ENCODE measurements at regions of chr2 and their contacts with region 1.

Region 1: GRCh38 chr2:120958623-120959366 is 223.1 kb downstream of the GLI2 start:
- DNase-seq: no peak
- ATAC-seq: 0 out of 2 replicates have a peak, but pooled peaks have one; percentile 27
- H3K4me3 ChIP-seq: no peak overlapping the region
- H3K27ac ChIP-seq: no peak overlapping the region
- H3K4me1 ChIP-seq: peaks cover 4% of the 10 kb centered on the region
- H3K27me3 ChIP-seq: no peaks in the 10 kb centered on the region
- CTCF ChIP-seq: peak; percentile 35
- POLR2A ChIP-seq: no peak
- RAD21 ChIP-seq: peak; percentile 45

Region 2: DNA sequence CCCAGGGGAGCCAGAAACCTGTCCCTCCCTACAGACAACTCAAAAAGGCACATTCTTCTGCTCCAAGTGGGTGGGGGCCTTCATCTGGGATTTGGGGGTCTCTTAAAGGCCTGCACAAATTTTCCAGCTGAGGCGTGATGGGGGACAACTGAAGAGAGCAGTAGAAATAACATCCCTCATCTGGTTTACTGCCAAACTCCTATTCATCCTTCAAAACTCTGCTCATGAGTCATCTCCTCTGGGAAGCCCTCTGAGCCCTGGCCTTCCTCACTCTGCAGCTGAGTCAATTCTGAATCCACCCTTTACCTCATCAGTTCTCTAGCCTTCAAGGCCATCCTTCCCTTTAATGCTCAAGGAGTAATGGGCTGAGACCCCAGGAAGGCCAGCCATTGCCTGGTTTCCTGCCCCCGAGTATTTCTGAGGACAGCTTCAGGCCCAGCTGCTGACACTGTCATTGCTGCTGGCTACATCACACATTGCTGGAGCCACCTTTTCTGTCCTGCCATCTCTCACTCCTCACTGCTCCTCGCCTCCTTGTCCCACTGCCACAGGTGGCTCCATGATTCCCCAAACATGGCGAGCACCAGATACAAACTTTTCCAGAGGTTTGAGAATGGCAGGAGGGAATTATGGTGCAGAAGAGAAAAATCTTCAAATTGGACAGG is 255.3 kb before region 1 on chr2:
- CTCF ChIA-PET with region 1: no interaction called
- POLR2A ChIA-PET with region 1: no interaction called
- dilution Hi-C with region 1: no loop called
- in situ Hi-C with region 1: no loop called
- intact Hi-C with region 1: loop called (anchors 5 kb)
- DNase-seq: peak; percentile 91
- ATAC-seq: peak; percentile 93
- H3K4me3 ChIP-seq: no peak overlapping the region
- H3K27ac ChIP-seq: peak overlapping the region; percentile 44; the same call in 1 of the 2 replicates
- H3K4me1 ChIP-seq: peaks cover 4% of the 10 kb centered on the region
- H3K27me3 ChIP-seq: no peaks in the 10 kb centered on the region
- CTCF ChIP-seq: no peak
- POLR2A ChIP-seq: no peak
- RAD21 ChIP-seq: no peak

Region 3: DNA sequence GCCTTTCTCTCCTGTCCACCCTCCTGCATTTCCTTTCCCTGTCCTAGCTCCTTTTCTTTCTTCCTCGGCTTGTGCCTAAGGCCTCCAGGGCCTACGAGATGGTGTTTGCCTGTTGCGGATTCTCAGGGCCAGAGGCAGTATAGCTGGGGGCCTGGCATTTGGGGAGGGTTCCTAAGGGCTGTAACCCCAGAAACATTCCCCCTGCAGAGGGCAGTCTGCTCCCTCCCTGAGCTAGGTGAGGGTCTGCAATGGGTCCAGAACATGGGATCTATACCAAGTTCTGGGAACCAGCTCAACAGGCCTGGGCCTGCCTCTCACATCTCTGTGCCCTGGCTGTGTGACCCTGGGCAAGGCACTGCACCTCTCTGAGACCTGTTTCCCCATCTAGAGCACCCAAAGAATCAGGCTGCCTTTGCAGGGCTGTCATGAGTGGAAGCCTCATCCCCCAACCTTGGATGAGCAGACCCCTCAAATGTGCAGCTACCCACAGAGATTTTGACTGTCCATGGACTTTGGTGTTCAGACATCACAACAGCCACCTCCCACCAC is 125.6 kb before region 1 on chr2:
- CTCF ChIA-PET with region 1: no interaction called
- POLR2A ChIA-PET with region 1: interaction called, 11 read pairs
- dilution Hi-C with region 1: no loop called
- in situ Hi-C with region 1: no loop called
- intact Hi-C with region 1: no loop called
- DNase-seq: no peak
- ATAC-seq: no peak
- H3K4me3 ChIP-seq: no peak overlapping the region
- H3K27ac ChIP-seq: no peak overlapping the region
- H3K4me1 ChIP-seq: peaks cover 13% of the 10 kb centered on the region; the same call in 1 of the 2 replicates
- H3K27me3 ChIP-seq: no peaks in the 10 kb centered on the region
- CTCF ChIP-seq: no peak
- POLR2A ChIP-seq: no peak
- RAD21 ChIP-seq: no peak

Region 4: DNA sequence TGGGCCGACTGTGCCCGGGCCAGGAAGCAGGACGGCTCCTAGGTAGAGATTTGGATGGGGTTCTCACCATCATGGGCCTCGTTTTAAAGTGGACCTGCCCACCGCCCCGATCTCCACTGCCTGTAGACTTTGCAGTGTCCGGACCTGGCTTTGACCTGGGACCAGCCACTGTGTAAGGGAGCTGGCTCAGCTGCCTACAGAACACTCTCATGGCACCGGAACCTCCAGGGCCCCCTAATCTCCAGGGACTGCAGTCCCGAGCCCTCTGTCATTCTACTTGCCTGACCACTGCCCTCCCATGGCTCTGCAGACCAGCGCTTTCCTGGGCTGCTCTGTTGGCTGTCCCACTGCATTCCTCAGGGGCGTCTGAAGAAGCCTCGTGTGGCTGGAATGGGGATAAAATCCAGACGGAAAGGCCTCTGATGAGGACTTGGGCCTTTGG is 102.4 kb before region 1 on chr2:
- CTCF ChIA-PET with region 1: interaction called, 11 read pairs
- POLR2A ChIA-PET with region 1: no interaction called
- dilution Hi-C with region 1: no loop called
- in situ Hi-C with region 1: no loop called
- intact Hi-C with region 1: no loop called
- DNase-seq: peak; percentile 63
- ATAC-seq: peak; percentile 79
- H3K4me3 ChIP-seq: no peak overlapping the region
- H3K27ac ChIP-seq: no peak overlapping the region
- H3K4me1 ChIP-seq: peaks cover 27% of the 10 kb centered on the region
- H3K27me3 ChIP-seq: no peaks in the 10 kb centered on the region
- CTCF ChIP-seq: peak; percentile 59
- POLR2A ChIP-seq: no peak
- RAD21 ChIP-seq: peak; percentile 48

Region 5: GRCh38 chr2:121076885-121077549 is 118.2 kb after region 1 on chr2:
- CTCF ChIA-PET with region 1: no interaction called
- POLR2A ChIA-PET with region 1: no interaction called
- dilution Hi-C with region 1: no loop called
- in situ Hi-C with region 1: no loop called
- intact Hi-C with region 1: no loop called
- DNase-seq: peak; percentile 28
- ATAC-seq: peak; percentile 59
- H3K4me3 ChIP-seq: no peak overlapping the region
- H3K27ac ChIP-seq: no peak overlapping the region
- H3K4me1 ChIP-seq: no peaks in the 10 kb centered on the region; the same call in 1 of the 2 replicates
- H3K27me3 ChIP-seq: peaks cover 17% of the 10 kb centered on the region; the same call in 1 of the 2 replicates
- CTCF ChIP-seq: peak; percentile 71
- POLR2A ChIP-seq: no peak
- RAD21 ChIP-seq: 0 out of 2 replicates have a peak, but pooled peaks have one; percentile 18

Region 6: DNA sequence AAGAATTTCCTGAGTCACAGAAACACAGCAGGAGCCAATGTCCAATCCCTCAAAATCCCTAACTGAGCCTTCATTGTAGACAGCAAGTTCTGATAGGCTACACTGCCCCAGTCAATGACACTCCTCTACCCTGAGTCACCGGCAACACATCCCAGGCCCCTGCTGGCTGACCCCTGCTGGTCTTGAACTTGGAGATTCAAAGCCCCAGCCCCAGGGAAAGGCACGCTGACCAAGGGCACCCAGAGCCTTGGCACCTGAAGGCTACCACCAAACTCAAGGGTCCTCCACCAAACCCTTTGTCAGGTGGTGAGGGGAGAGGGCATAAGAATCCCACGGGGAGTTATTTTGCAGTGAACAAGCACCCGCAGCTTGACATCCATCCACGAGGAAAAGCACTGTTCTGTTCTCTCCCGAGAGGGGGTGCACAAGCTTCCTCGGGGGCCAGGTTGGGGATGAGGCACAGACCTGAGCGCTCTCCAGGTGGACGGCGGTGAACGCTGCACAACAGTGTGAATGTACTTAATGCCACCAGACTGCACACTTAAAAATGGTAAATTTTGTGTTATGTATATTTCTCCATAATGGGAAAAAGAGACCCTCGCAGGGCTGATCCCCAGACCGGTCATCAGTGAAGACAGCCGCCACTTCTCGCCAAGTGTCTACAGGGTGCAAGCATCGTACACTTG is 279.3 kb after region 1 on chr2:
- CTCF ChIA-PET with region 1: no interaction called
- POLR2A ChIA-PET with region 1: no interaction called
- dilution Hi-C with region 1: no loop called
- in situ Hi-C with region 1: no loop called
- intact Hi-C with region 1: no loop called
- DNase-seq: no peak
- ATAC-seq: no peak
- H3K4me3 ChIP-seq: no peak overlapping the region
- H3K27ac ChIP-seq: no peak overlapping the region
- H3K4me1 ChIP-seq: no peaks in the 10 kb centered on the region
- H3K27me3 ChIP-seq: peaks cover 52% of the 10 kb centered on the region
- CTCF ChIP-seq: no peak
- POLR2A ChIP-seq: no peak
- RAD21 ChIP-seq: no peak

Region 7: DNA sequence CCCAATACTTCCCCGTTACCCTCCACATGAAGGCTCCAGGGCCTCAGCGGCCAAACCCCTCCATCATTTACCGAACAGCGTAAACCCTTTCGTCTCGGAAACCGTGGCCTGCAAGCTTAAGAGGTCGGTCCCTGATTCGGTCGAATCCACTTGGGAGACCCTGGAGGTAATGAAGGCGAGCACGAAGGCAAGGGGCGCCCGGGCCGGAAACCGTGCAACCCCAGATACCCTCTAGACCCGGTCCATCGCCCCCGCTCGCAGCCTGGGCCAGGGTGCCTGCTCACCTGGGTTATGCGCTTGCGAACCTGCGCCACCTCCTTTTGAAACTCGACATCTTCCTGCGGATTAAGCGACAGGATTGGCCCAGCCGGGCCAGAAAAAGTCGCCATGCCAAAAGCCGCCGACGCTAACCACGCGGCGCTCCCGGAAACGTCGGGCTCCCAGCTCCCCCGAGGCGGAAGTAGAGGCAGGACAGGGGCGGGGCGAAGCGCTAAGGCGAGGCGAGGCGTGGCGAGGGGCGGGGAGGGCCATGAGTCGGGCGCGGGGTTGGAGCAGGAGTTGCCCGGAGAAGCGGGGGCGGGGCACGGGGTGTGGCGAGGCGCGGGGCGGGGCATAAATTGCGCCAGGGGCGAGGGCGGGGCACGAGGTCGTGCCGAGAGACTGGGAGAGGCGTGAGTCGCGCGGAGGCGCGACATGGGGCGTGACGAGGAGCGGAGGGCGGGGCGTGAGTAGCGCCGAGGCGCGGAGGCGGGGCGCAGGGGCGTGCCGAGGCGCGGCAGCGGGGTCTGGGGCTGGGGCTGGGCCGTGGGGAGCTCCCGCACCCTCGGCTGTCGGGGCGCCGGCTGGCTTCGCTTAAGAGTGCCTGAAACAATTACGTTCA is 777.9 kb after region 1 on chr2 and contains the start of gene NIFK:
- CTCF ChIA-PET with region 1: no interaction called
- POLR2A ChIA-PET with region 1: no interaction called
- dilution Hi-C with region 1: no loop called
- in situ Hi-C with region 1: no loop called
- intact Hi-C with region 1: no loop called
- DNase-seq: peak; percentile 95
- ATAC-seq: peak; percentile 98
- H3K4me3 ChIP-seq: peak within 1 kb of the TSS; percentile 79
- H3K27ac ChIP-seq: peak within 1 kb of the TSS; percentile 99
- H3K4me1 ChIP-seq: no peaks in the 10 kb centered on the region
- H3K27me3 ChIP-seq: peaks cover under 1% of the 10 kb centered on the region; the same call in 1 of the 2 replicates
- CTCF ChIP-seq: no peak
- POLR2A ChIP-seq: peak; percentile 62; the same call in 1 of the 2 replicates
- RAD21 ChIP-seq: no peak
- total RNA-seq, gene NIFK: 19.5 and 47.8 TPM in 2 replicates

Measured in IMR-90 (cell line).